ENCODE measurements at regions of chr2 and their contacts with region 1.

Region 1: GRCh38 chr2:182980115-182980514 is 58.1 kb downstream of the NCKAP1 start:
- DNase-seq: peak in 2 of 9 experiments; percentile 21 to 38
- ATAC-seq: peak; percentile 54
- H3K4me3 ChIP-seq: no peak overlapping the region
- H3K4me3 Mint-ChIP-seq: no peak overlapping the region
- H3K27ac ChIP-seq: no peak overlapping the region
- H3K27ac Mint-ChIP-seq: no peak overlapping the region
- H3K4me1 ChIP-seq: no peaks in the 10 kb centered on the region
- H3K4me1 Mint-ChIP-seq: no peaks in the 10 kb centered on the region
- H3K27me3 ChIP-seq: no peaks in the 10 kb centered on the region
- H3K27me3 Mint-ChIP-seq: no peaks in the 10 kb centered on the region
- CTCF ChIP-seq: peak; percentile 87

Region 2: DNA sequence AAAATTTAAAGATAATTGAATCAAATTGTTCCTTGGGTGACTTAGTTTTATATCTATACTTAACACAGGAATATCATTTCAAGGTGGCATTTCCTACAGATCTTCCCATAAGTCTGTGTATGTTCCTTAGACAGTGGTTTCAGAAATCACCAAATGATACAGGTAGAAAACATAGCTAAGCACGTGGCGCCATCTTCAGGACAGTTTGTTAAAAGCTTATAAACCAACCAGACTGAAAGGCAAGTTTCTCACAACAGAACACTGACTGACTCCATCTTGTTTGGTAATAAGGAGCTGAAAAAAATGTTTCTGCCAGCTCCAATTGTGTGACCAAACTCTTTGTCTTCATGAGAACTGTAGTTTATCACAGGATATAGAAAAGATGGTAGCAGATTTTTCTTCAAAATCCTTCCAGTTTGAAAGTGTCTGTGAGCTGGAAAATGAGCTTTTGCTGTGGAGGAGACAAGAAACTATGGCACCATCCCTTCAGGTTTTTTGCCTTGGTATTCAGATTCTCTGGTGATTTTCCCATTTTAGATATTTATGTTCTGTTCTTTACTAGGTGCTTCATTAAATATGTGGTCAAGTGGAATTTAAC is 1265.0 kb before region 1 on chr2:
- CTCF ChIA-PET with region 1: no interaction called
- POLR2A ChIA-PET with region 1: no interaction called
- intact Hi-C with region 1: no loop called
- DNase-seq: peak; percentile 31 to 83 (median 71)
- ATAC-seq: peak; percentile 83
- H3K4me3 ChIP-seq: no peak overlapping the region
- H3K4me3 Mint-ChIP-seq: no peak overlapping the region
- H3K27ac ChIP-seq: no peak overlapping the region
- H3K27ac Mint-ChIP-seq: no peak overlapping the region
- H3K4me1 ChIP-seq: no peaks in the 10 kb centered on the region
- H3K4me1 Mint-ChIP-seq: no peaks in the 10 kb centered on the region
- H3K27me3 ChIP-seq: no peaks in the 10 kb centered on the region
- H3K27me3 Mint-ChIP-seq: peaks cover 2% of the 10 kb centered on the region
- CTCF ChIP-seq: peak; percentile 69

Region 3: DNA sequence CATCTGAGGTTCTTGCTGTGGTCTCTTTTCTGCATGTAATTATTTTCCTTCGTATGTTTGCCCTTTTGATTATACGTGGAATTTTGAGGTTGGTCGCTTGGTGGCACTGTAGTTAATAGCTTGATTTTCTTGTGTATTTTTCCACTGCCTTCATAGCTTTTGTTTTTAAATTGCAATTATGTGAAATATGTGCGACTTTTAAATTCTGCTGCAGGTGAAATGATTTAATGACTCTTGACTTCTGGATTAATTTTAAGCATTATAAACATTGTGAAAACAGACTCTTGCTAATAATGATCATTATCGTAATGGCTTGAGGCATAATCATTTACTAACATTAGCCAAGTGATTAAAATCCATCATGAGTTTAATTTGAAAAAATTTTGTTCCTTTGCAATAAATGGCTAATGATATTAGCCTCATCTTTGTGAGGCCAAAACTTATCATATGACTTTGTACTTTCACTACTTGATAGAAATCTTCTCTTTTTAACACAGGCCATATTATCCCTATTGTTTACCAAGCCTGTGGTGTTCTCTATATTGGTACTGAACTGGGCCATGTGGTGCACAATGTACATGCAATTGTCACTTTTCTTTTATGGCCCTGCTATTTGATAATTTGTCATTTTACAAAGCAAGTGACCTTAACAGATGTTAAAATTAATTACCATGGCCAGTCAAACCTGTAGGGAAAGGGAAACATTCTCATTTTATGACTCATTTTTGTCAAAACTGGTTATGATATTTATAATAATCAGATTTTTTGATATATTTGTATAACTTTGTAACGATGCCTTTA is 1237.0 kb before region 1 on chr2:
- CTCF ChIA-PET with region 1: no interaction called
- POLR2A ChIA-PET with region 1: no interaction called
- intact Hi-C with region 1: loop called in 1 of 2 experiments (anchors 5 kb)
- DNase-seq: peak in 6 of 9 experiments; percentile 6 to 60 (median 20)
- ATAC-seq: no peak
- H3K4me3 ChIP-seq: no peak overlapping the region
- H3K4me3 Mint-ChIP-seq: no peak overlapping the region
- H3K27ac ChIP-seq: no peak overlapping the region
- H3K27ac Mint-ChIP-seq: no peak overlapping the region
- H3K4me1 ChIP-seq: no peaks in the 10 kb centered on the region
- H3K4me1 Mint-ChIP-seq: no peaks in the 10 kb centered on the region
- H3K27me3 ChIP-seq: no peaks in the 10 kb centered on the region
- H3K27me3 Mint-ChIP-seq: peaks cover 4% of the 10 kb centered on the region
- CTCF ChIP-seq: peak; percentile 54

Region 4: DNA sequence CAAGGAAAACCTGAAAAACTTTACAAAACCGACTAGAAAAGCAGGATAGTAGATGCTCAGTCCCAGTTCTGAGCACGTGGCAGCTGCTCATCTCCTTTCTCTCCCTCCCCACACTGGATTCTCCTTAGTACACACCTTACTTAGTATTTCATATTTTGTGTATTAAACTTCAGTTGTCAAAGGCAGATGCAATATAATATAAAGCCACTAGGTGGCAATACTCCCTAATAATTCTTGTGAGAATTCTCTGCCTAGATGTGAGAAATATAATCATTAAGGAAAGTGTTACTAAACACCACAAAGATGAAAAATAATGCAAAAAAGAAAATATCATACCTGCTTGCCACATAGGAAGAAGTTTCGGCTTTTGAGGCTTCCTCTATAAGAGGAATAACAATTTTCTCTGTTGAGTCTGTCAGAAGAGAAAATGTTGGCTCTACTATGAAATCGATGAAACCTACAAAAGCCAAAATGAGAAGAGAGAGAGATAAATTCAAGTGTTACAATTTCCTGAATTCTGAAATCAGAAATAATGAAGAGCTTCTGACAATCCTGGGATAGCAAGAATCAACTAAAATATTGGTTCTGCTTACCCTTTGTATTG is 793.9 kb before region 1 on chr2:
- CTCF ChIA-PET with region 1: interaction called, 25 read pairs
- POLR2A ChIA-PET with region 1: no interaction called
- intact Hi-C with region 1: loop called (anchors 1 to 2 kb)
- DNase-seq: peak in 2 of 9 experiments; percentile 22 to 37
- ATAC-seq: no peak
- H3K4me3 ChIP-seq: no peak overlapping the region
- H3K4me3 Mint-ChIP-seq: no peak overlapping the region
- H3K27ac ChIP-seq: no peak overlapping the region
- H3K27ac Mint-ChIP-seq: no peak overlapping the region
- H3K4me1 ChIP-seq: no peaks in the 10 kb centered on the region
- H3K4me1 Mint-ChIP-seq: no peaks in the 10 kb centered on the region
- H3K27me3 ChIP-seq: no peaks in the 10 kb centered on the region
- H3K27me3 Mint-ChIP-seq: peaks cover 2% of the 10 kb centered on the region
- CTCF ChIP-seq: peak; percentile 99

Region 5: GRCh38 chr2:182240862-182241371 is 739.2 kb before region 1 on chr2:
- CTCF ChIA-PET with region 1: interaction called, 4 read pairs
- POLR2A ChIA-PET with region 1: no interaction called
- intact Hi-C with region 1: loop called in 1 of 2 experiments (anchors 2 kb)
- DNase-seq: peak in 2 of 9 experiments; percentile 7 to 15
- ATAC-seq: no peak
- H3K4me3 ChIP-seq: no peak overlapping the region
- H3K4me3 Mint-ChIP-seq: no peak overlapping the region
- H3K27ac ChIP-seq: no peak overlapping the region
- H3K27ac Mint-ChIP-seq: no peak overlapping the region
- H3K4me1 ChIP-seq: no peaks in the 10 kb centered on the region
- H3K4me1 Mint-ChIP-seq: no peaks in the 10 kb centered on the region
- H3K27me3 ChIP-seq: no peaks in the 10 kb centered on the region
- H3K27me3 Mint-ChIP-seq: peaks cover 2% of the 10 kb centered on the region
- CTCF ChIP-seq: no peak

Region 6: DNA sequence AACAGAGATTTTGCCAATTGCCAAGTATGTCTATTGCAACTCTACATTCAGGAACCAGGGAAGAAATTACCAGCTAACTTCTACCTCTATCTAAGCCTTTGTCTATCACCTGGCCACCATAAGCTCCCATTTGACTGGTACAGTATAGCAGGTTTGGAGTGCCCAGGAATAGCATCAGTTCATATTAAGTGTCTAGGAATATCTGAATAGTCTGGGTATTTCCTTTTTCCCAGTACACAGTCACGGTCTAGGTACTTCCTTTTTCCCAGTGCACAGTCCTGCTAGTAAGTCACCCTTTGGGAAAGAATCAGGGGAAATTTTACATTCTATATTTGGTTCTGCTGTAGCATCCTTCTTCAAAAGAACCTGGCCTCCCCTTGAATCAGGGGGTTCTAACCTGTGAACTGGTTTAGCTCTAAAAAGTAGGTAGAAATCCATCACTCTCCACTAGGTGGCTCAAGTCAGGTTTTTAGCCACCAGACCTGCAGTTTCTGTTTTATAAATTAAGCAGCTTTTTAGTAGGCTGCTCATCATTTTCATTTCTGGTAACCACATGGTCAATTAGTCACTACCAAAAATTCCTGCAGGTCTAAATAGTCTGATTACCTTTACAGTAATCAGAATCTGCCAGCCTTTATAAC is 313.3 kb before region 1 on chr2:
- CTCF ChIA-PET with region 1: interaction called, 22 read pairs
- POLR2A ChIA-PET with region 1: no interaction called
- intact Hi-C with region 1: loop called (anchors 1 kb)
- DNase-seq: peak in 3 of 9 experiments; percentile 12 to 61 (median 48)
- ATAC-seq: peak; percentile 51
- H3K4me3 ChIP-seq: no peak overlapping the region
- H3K4me3 Mint-ChIP-seq: no peak overlapping the region
- H3K27ac ChIP-seq: no peak overlapping the region
- H3K27ac Mint-ChIP-seq: no peak overlapping the region
- H3K4me1 ChIP-seq: no peaks in the 10 kb centered on the region
- H3K4me1 Mint-ChIP-seq: no peaks in the 10 kb centered on the region
- H3K27me3 ChIP-seq: no peaks in the 10 kb centered on the region
- H3K27me3 Mint-ChIP-seq: peaks cover 2% of the 10 kb centered on the region
- CTCF ChIP-seq: peak; percentile 61